PC-3 (cell line): ENCODE measurements at regions of chr5 and their contacts with region 1.

Region 1: DNA sequence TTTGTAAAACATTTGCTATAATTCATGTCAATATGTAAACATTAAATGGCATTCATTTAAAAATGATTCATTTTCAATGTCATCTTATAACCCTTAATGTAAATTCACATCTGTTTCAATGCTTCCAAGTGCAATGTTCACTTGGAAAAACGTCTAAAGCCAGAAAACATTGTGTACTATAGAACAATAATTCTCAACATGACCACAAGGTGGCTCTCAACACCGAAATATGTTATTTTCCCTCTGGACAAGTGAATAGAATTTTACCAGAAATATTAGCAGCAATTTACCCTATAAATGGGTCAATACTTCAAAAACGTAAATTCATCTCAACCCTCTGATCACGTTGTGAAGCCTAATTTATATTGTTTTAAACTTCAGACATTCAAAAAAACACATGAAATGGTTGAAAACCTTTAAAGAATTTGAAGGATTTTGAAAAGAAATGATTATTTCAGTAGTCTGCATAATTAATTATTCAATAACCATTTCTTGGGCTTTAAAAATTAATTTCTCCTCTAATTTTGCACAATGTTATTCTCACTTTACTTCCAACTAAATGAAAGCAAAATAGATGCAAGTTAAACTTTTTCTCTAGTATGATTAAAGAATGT is 11.0 kb downstream of the CDH10 start:
- DNase-seq: peak; percentile 77
- ATAC-seq: peak; percentile 45; the same call in 1 of the 2 replicates
- H3K4me3 ChIP-seq: no peak overlapping the region
- H3K27ac ChIP-seq: no peak overlapping the region
- H3K4me1 ChIP-seq: no peaks in the 10 kb centered on the region
- H3K27me3 ChIP-seq: no peaks in the 10 kb centered on the region
- CTCF ChIP-seq: peak; percentile 81

Region 2: GRCh38 chr5:26009742-26010141 is 1375.9 kb after region 1 on chr5:
- CTCF ChIA-PET with region 1: no interaction called
- POLR2A ChIA-PET with region 1: no interaction called
- intact Hi-C with region 1: loop called (anchors 10 kb)
- DNase-seq: peak; percentile 52
- ATAC-seq: peak; percentile 81
- H3K4me3 ChIP-seq: peak overlapping the region; percentile 40; the same call in 1 of the 2 replicates
- H3K27ac ChIP-seq: no peak overlapping the region
- H3K4me1 ChIP-seq: no peaks in the 10 kb centered on the region
- H3K27me3 ChIP-seq: no peaks in the 10 kb centered on the region
- CTCF ChIP-seq: peak; percentile 77

Region 3: DNA sequence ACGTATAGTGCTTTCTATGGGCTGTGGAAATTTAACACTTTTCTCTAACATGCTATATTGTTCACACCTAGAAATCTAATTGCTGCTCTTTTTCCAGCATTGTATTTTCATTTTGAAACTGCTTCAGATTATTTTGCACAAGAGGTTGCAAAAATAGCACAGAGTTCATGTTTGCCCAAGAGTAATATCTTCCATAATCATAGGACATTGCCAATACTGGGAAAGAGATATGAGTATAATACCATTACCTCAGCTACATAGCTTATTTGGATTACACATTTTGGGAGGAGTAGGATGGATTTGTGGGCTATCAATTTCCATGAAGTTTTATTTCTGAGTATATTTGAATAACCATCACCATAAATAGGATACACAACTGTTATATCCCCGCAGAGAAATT is 1687.5 kb after region 1 on chr5:
- CTCF ChIA-PET with region 1: no interaction called
- POLR2A ChIA-PET with region 1: no interaction called
- intact Hi-C with region 1: no loop called
- DNase-seq: no peak
- ATAC-seq: no peak
- H3K4me3 ChIP-seq: no peak overlapping the region
- H3K27ac ChIP-seq: no peak overlapping the region
- H3K4me1 ChIP-seq: no peaks in the 10 kb centered on the region
- H3K27me3 ChIP-seq: no peaks in the 10 kb centered on the region
- CTCF ChIP-seq: no peak